HEK293T (cell line): ENCODE measurements at regions of chr7 and their contacts with region 1.

Region 1: DNA sequence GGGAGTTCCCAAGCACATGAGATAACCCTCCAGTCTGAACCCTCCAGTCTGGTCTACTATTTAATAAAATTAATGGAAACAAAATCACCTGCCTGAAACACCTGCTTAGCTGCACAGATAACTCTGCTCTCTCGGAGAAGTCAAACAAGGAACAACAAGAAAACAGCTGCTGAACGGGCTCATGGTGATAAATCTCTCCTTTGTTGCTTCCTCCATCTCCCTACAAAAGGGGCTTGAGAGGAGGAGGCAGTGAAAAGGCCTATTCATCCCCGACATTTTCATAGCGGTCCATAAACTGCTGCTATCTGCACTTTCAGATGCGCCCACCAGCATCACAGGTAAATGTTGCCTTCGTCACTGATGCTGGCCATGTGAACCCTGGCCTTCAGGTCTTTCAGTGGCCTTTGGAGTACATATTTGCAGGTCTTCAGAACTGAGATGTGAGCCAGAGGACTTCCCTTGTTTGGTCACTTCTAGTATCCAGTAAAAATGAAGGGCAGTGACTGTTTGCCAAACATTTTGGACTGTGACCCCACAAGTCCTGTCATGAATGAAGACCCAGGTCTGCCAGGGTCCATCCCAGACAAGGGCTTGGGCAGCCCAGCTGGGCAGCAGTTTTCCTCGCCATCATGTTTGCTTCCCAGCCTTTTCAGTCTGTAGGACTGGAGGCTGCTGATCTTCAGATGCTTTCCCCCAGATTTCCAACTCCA is 15.9 kb downstream of the FKBP6 start:
- DNase-seq: no peak

Region 2: DNA sequence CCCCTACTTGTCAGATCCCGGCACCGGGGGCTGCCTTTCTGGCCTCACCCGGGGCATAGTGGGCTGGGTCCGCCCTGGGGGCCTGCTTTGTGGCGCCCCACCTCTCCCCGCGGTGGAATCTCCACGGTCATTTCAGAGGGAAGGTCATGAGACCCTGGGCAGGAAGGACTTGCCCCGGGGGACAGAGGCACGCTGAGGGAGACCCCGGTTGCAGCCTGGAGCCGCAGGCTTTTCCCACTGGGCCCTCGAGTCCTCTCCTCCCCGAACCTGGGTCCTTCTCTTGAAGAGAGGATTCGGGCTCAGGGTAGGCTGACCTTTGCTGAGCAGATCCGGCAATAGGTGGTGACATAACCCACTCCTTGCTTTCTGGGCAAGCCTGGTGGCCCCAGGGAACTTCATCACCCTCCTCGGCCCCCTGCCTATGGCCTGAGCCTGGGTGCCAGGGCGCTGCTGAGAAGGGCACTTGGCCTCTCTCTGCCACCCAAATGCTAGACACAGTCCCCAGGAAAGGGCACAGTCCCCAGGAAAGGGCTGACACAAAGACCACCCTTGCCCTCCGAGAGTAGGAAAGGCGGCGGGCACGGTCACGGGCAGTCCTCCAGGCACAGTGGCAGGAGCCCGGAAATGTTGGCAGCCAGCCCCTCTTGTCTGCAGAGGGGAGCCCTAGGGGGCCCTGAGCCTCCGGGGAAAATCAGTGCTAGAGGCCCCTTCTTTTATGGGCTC is 20.3 kb after region 1 on chr7:
- CTCF ChIA-PET with region 1: no interaction called
- POLR2A ChIA-PET with region 1: no interaction called
- DNase-seq: no peak

Region 3: DNA sequence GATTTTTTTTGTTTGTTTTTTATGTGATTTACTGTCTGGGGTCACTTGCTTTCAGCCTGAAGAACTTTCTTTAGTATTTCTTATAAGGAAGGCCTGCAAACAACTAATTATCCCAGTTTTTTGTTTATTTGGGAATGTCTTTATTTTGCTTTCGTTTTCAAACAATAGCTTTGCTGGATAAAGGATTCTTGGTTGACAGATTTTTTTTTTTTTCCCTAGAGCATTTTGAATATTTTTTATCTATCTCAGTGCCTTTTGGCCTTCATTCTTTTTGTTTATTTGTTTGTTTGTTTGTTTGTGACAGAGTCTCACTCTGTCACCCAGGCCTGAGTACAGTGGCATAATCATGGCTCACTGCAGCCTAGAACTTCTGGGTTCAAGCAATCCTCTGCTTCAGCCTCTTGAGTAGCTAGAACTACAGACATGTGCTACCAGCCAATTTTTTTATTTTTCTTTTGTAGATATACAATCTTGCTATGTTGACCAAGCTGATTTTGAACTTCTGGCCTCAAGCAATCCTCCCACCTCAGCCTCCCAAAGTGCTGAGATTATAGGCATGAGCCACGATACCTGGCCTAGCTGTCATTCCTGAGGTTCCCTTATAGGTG is 43.5 kb after region 1 on chr7:
- CTCF ChIA-PET with region 1: interaction called, 11 read pairs
- POLR2A ChIA-PET with region 1: no interaction called
- DNase-seq: no peak